ENCODE measurements at regions of chr17 and their contacts with region 1.

Region 1: DNA sequence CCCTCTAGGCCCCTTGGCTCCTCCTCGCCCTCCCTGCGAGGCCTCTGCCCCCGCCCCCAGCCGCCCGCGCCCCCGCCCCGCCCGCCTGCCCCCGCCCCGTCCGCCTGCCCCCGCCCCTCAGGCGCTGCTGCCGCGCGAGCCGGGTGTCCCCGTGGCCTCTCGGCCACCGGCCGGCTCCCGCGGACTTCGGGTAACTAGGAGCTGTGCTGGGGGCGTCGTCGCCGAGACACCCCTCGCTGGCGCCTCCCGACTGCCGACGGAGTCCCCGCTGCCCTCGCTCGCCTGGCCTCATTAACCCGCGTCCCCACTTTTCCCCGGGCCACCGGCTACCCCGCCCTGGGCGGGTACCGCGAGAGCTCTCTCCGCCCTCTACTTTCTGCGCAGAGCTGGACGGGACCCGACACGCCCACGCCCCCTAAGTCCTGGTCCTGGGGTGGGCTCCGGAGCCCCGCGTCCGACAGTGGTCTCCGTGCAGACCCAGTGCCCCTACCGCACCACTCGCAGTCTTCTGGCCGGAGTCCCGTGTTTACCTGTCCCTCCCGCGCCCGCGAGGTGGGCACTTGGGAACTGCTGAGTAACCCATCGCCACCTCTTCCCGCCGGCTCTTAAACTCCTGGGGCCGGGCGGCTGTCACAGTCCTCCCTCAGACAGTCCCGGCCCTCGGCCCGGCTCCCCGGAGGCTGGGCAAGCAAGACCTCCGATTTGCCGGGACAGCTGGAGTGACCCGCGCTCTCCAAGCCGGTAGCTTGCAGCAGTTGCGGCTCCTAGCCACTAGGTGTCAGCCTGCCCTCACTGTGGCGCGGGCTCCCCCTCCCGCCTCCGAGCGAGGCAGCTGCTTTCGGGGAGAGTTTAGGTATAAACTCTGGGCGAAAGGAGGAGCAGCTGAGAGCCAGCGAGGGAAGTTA is at the start of gene TLCD1:
- DNase-seq: peak; percentile 98
- H3K4me3 Mint-ChIP-seq: peak within 1 kb of the TSS; percentile 98
- H3K27ac Mint-ChIP-seq: peak within 1 kb of the TSS; percentile 100
- H3K4me1 Mint-ChIP-seq: peaks cover 53% of the 10 kb centered on the region
- H3K27me3 Mint-ChIP-seq: no peaks in the 10 kb centered on the region
- total RNA-seq, gene TLCD1: 12.5 and 16.8 TPM in 2 replicates

Region 2: GRCh38 chr17:28744972-28745785 is 18.7 kb after region 1 on chr17:
- intact Hi-C with region 1: loop called (anchors 1 kb)
- DNase-seq: peak; percentile 82
- H3K4me3 Mint-ChIP-seq: peak overlapping the region; percentile 94
- H3K27ac Mint-ChIP-seq: peak overlapping the region; percentile 86
- H3K4me1 Mint-ChIP-seq: peaks cover 38% of the 10 kb centered on the region
- H3K27me3 Mint-ChIP-seq: no peaks in the 10 kb centered on the region

Region 3: DNA sequence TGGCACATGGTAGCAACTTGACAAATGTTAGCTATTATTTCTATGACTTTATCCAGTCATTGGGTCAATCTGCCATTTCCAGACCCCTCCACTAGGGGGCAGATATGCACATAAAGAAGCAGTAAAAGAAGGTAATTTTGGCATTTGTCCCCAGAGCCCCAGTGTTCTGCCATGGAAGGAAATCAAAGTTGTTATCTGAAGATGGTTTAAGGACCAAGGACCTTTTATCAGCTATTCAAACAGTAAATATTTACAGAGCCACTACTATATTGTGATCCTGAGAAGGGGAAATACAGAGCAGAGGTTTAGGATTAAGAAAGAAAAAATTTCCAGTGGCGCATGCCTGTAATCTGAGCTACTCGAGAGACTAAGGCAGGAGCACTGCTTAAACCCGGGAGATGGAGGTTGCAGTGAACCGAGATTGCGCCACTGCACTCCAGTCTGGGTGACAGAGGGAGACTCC is 37.4 kb after region 1 on chr17:
- intact Hi-C with region 1: loop called (anchors 5 kb)
- DNase-seq: peak; percentile 93
- H3K4me3 Mint-ChIP-seq: no peak overlapping the region
- H3K27ac Mint-ChIP-seq: no peak overlapping the region
- H3K4me1 Mint-ChIP-seq: peaks cover 15% of the 10 kb centered on the region
- H3K27me3 Mint-ChIP-seq: no peaks in the 10 kb centered on the region

Region 4: DNA sequence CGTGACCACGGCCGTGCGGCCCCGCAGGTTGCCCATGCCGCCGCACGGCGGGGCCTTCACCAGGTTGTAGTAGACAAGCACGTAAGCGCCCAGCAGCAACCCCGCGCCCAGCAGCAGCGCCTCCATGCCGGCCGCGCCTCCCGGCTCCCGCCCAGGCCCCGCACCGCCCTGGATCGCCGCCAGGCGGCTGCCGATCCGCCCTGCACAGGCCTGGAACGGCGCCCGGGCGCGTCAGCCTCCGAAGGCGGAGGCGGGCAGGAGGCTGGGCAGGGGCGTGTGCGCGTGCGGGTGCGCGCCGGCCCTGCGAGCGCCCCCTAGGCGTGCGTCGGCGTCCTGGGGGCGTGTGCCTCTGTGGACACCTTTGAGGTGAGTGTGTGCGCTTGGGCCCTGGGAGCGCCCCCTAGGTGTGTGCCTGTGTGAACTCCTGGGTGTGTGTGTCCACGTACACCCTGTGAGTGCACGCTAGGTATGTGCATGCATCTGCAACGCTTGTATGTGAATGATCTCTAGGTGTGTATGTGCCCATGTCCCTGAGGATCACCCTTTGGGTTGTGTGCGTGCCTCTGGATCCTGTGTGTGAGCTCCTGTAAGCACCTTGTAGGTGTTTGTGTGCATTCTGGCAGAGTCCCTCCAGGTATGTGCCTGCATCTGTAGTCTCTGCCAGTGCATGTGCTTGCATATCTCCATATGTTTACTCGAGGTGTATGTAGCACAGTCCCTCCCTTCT is 176.5 kb after region 1 on chr17 and contains the start of gene DHRS13:
- intact Hi-C with region 1: loop called (anchors 2 kb)
- DNase-seq: peak; percentile 99
- H3K4me3 Mint-ChIP-seq: peak within 1 kb of the TSS; percentile 90
- H3K27ac Mint-ChIP-seq: peak within 1 kb of the TSS; percentile 86
- H3K4me1 Mint-ChIP-seq: peaks cover 39% of the 10 kb centered on the region
- H3K27me3 Mint-ChIP-seq: no peaks in the 10 kb centered on the region
- total RNA-seq, gene DHRS13: 32.4 and 34.3 TPM in 2 replicates

Region 5: DNA sequence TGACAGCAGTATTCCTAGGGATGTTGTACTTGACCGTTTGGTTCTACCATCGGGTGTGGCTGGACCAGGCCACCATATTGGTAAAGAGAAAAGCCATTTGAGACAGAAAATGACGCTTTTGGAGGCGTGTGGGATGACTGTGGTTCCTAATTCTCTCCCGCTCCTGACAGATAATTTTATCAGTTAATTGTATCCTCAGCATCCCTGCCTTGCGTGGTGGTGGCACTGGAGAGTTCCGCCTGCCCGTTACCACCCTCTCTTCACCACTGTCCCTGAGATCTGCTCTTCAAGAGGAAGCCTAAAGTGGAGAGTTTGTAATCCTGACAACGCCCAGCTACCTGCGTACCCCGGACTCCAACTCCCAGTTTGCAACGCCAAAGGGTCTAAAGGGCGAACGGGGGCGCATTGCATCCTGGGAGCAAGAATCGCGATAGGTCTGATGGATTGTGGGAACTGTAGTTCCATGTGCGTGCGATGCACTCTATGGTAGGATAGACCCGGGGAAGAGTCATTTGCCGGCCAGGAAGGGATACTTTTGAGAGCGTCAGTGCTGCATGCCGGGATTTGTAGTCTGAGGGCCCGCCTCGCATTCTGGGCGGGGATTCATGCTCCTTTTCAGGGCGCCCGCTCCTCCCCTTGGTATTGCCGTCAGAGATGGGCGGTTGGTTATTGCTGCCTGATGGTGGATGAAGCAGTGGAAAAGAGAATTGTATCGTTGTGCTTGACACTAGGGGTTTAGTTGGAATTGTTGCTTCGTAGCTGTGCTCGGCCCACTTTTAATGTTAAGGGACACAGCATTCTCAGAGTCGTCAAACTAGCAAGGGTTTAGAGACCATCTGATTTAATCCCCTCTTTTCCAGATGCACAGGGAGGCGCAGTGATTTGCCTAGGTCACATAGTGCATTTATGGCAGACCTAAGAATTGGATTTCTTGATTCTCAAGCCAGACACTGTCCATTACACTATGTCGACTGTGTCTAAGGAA is 225.8 kb after region 1 on chr17:
- intact Hi-C with region 1: loop called (anchors 1 kb)
- DNase-seq: peak; percentile 98
- H3K4me3 Mint-ChIP-seq: no peak overlapping the region
- H3K27ac Mint-ChIP-seq: no peak overlapping the region
- H3K4me1 Mint-ChIP-seq: peaks cover 21% of the 10 kb centered on the region
- H3K27me3 Mint-ChIP-seq: peaks cover 2% of the 10 kb centered on the region

Region 6: DNA sequence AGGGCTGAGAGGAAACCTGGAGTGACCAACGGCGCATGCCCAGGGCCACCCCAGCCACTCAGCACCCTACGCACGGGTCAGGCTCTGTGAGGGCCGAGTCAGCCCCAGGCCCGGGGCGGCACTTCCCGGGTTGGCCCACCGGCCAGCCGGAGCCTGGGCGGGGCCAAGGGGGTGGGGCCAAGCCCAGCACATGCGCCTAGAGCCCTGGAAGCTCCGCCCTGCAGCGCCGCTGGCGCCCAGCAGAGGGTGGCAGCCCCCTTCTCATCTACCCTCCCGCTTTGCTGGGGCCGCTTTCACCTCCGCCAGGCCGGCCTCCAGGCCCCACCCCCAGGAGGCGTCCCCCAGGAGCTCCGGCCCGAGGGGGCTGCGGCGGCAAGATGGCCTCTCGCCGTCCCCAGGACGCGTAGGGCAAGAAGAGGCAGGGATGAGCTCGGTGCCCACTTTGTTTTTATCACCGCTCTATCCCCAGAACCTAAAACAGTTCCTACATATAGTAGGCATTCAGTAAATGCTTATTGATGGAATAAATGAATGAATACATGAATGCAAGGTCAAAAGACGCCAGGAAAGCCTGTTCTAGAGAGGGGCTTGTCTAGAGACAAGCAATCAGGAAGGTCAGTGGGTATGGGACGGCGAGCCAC is 422.4 kb after region 1 on chr17:
- intact Hi-C with region 1: loop called (anchors 10 kb)
- DNase-seq: peak; percentile 99
- H3K4me3 Mint-ChIP-seq: peak overlapping the region; percentile 77
- H3K27ac Mint-ChIP-seq: peak overlapping the region; percentile 81
- H3K4me1 Mint-ChIP-seq: peaks cover 49% of the 10 kb centered on the region
- H3K27me3 Mint-ChIP-seq: no peaks in the 10 kb centered on the region

Region 7: DNA sequence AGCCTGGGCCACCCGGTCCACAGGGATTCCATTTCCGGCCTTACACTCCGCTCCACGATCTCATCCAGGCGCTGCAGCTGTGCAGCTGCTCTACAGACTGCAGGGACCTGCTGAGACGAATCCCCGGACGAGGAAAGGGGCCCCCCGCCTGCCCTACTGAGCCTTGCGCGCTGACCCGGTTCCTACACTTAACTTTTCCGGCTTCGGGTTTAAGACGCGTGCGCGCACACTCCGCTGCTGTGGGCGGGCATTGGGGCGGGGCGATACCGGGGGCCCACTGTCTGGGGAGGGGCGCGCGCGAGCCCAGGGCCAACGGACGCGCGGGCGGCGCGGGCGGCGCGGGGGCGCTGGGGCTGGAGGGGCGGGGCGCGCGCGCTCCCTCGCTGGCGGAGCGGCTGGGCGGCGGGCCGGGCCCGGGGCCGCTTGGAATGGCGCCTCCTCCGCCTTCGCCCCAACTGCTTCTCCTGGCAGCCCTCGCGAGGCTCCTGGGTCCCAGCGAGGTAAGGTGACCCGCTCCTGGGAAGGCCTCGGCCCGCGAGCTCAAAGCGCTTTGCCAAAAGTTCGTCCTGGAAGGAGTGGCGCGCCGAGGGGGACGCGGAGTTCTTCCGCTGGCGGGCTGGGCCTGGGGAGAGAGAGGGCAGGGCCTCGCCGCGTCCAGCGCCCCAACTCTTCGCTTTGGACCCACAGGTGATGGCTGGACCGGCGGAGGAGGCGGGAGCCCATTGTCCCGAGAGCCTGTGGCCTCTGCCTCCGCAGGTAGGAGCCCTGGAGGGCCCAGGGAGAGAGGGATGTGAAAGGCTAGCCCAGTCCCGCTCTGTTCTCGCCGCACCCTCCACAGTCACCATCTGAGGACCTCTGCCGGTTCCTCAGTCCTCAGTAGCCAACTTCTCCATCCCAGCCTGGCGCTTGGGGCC is 842.1 kb after region 1 on chr17 and contains the start of gene TP53I13:
- intact Hi-C with region 1: loop called (anchors 5 kb)
- DNase-seq: peak; percentile 96
- H3K4me3 Mint-ChIP-seq: peak within 1 kb of the TSS; percentile 93
- H3K27ac Mint-ChIP-seq: peak within 1 kb of the TSS; percentile 94
- H3K4me1 Mint-ChIP-seq: peaks cover 27% of the 10 kb centered on the region
- H3K27me3 Mint-ChIP-seq: no peaks in the 10 kb centered on the region
- total RNA-seq, gene TP53I13: 69.7 and 77.9 TPM in 2 replicates